AG04450 (cell line): ENCODE measurements at regions of chr1 and their contacts with region 1.

Region 1: GRCh38 chr1:158124999-158125398 is 55.7 kb upstream of the CD1D start:
- DNase-seq: peak; percentile 89
- H3K4me3 ChIP-seq: no peak overlapping the region
- H3K27ac ChIP-seq: no peak overlapping the region
- H3K27me3 ChIP-seq: peaks cover 40% of the 10 kb centered on the region
- CTCF ChIP-seq: peak; percentile 96

Region 2: GRCh38 chr1:157580179-157580827 is 544.7 kb before region 1 on chr1:
- CTCF ChIA-PET with region 1: interaction called, 37 read pairs
- POLR2A ChIA-PET with region 1: no interaction called
- DNase-seq: peak; percentile 13
- H3K4me3 ChIP-seq: no peak overlapping the region
- H3K27ac ChIP-seq: no peak overlapping the region
- H3K27me3 ChIP-seq: no peaks in the 10 kb centered on the region
- CTCF ChIP-seq: peak; percentile 71

Region 3: DNA sequence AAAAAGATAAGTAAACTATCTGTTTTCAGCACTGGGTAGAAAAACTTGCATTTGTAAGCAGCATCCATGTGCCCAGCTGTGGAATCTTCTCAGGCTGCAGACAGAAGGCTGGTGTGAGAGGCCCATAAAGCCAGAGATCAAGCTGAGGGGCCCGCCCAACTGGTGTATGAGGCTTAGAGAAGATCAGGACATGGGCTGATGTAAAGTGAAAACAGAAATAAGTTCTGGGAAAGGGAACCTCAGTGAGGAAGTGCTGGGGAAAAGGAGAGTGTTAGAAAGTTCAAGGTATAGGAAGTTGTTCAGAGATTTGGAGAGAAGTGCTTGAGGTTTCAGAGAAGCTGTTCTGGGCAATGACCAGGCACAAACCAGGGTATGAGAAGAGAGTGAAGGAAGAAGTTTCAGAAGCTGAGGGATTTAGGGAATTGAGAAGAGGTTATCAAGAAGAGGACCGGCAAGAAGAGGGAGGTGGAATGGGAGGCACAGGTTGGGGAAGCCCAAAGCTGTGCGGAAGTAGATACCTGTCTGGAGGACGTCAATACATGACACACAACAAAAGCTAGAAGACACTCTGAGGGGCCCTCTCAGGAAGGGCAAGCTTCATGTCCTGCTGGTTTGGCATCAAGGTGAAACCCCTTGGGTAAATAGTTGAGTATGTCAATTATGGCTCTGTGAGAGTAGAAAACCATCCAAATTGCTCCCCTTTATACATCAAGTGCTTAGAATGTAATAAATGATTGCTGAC is 280.7 kb before region 1 on chr1:
- CTCF ChIA-PET with region 1: no interaction called
- POLR2A ChIA-PET with region 1: no interaction called
- DNase-seq: no peak
- H3K4me3 ChIP-seq: no peak overlapping the region
- H3K27ac ChIP-seq: no peak overlapping the region
- H3K27me3 ChIP-seq: peaks cover 2% of the 10 kb centered on the region
- CTCF ChIP-seq: no peak

Region 4: GRCh38 chr1:157878059-157878458 is 246.9 kb before region 1 on chr1:
- CTCF ChIA-PET with region 1: interaction called, 21 read pairs
- POLR2A ChIA-PET with region 1: no interaction called
- DNase-seq: peak; percentile 7
- H3K4me3 ChIP-seq: no peak overlapping the region
- H3K27ac ChIP-seq: no peak overlapping the region
- H3K27me3 ChIP-seq: no peaks in the 10 kb centered on the region
- CTCF ChIP-seq: peak; percentile 46

Region 5: DNA sequence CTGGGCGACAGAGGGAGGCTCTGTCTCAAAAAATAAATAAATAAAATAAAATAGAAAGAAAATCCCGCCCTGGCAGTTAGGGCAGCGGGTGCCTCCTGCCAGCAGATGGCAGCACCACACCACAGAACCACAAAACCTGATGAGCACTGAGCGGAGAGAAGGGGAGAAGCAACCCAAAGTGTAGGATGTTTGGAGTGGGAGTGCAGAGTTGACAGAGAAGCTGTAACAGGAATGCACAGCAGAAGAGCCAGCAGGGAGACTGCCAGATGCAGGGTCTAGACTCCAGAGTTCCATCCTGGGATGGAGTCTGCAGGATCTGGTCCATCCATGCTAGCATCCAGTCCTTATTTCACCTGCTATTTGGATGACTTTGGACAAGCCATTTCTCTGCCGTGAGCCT is 161.3 kb before region 1 on chr1:
- CTCF ChIA-PET with region 1: interaction called, 1,031 read pairs
- POLR2A ChIA-PET with region 1: interaction called, 3 read pairs
- DNase-seq: peak; percentile 51
- H3K4me3 ChIP-seq: no peak overlapping the region
- H3K27ac ChIP-seq: no peak overlapping the region
- H3K27me3 ChIP-seq: peaks cover 16% of the 10 kb centered on the region
- CTCF ChIP-seq: peak; percentile 92

Region 6: DNA sequence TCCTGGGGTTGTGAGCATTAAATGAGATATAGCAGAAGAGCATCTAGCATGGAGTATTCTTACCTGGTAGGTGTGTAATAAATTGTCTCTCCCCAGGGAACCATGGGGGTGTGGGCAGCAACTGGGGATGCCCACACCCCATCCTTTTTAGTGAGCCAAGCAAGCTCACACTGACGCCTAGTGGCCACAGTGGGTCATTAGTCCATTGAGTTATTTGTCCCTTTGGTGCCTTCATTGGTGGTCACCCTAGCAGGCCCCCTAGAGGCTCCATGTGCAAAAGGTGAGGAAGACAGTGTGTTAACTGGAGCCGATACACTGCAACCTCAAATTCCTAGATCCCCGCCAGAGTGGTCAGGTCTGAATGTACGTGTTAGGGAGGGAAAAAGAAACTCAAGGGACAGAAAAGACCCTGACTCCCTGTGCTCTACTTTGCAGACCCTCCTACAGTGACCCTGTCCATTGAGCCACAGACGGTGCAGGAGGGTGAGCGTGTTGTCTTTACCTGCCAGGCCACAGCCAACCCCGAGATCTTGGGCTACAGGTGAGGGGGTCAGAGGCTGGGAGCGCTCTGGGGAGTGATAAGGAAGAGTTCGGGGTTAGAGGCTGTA is 37.6 kb before region 1 on chr1:
- CTCF ChIA-PET with region 1: interaction called, 281 read pairs
- POLR2A ChIA-PET with region 1: no interaction called
- DNase-seq: peak; percentile 57
- H3K4me3 ChIP-seq: no peak overlapping the region
- H3K27ac ChIP-seq: no peak overlapping the region
- H3K27me3 ChIP-seq: no peaks in the 10 kb centered on the region
- CTCF ChIP-seq: peak; percentile 98

Region 7: GRCh38 chr1:158095737-158096335 is 29.2 kb before region 1 on chr1:
- CTCF ChIA-PET with region 1: interaction called, 281 read pairs
- POLR2A ChIA-PET with region 1: no interaction called
- DNase-seq: no peak
- H3K4me3 ChIP-seq: no peak overlapping the region
- H3K27ac ChIP-seq: no peak overlapping the region
- H3K27me3 ChIP-seq: no peaks in the 10 kb centered on the region
- CTCF ChIP-seq: peak; percentile 75